Sigmoid colon (tissue), 7 donors: ENCODE measurements at regions of chr12 and their contacts with region 1.

Region 1: GRCh38 chr12:13428538-13429265 is 232.2 kb downstream of the EMP1 start:
- DNase-seq: peak; percentile 66
- H3K4me3 ChIP-seq: no peak overlapping the region
- H3K27ac ChIP-seq: peak overlapping the region in 3 of 4 donors; percentile 58 to 75 (median 66)
- H3K4me1 ChIP-seq: peaks cover 0 to 25% (median 20%) of the 10 kb centered on the region in 4 donors
- H3K27me3 ChIP-seq: no peaks in the 10 kb centered on the region
- CTCF ChIP-seq: no peak
- EP300 ChIP-seq: no peak
- POLR2A ChIP-seq: no peak

Region 2: DNA sequence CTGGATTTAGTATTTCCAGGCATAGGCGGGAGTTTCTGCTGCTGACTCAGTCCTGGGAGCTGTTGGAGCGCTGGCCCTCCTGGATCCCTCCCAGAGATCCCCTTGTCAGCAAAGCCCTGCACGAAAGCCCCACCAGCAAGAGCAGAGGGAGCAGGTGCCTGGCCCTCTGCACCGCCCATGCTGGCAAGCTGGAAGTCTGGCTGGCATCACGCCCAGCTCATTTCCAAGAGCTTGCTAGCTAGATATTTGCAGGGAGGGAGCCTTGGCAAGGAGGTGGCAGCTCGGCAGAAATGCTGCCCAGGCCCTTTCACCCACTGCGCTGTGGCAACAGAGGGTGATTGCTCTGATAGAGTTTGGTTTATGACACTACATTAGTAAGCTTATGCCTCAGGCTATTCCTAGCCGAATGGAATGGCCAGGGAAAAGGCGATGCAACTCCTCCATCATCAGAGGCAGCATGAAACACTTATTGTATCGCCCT is 38.3 kb before region 1 on chr12:
- intact Hi-C with region 1: loop called (anchors 2 kb)
- DNase-seq: peak; percentile 97
- H3K4me3 ChIP-seq: no peak overlapping the region
- H3K27ac ChIP-seq: peak overlapping the region; percentile 64 to 76 (median 68)
- H3K4me1 ChIP-seq: peaks cover 0 to 21% (median 17%) of the 10 kb centered on the region in 4 donors
- H3K27me3 ChIP-seq: no peaks in the 10 kb centered on the region
- CTCF ChIP-seq: no peak
- EP300 ChIP-seq: no peak
- POLR2A ChIP-seq: no peak

Region 3: GRCh38 chr12:13609894-13610679 is 181.4 kb after region 1 on chr12:
- intact Hi-C with region 1: no loop called
- DNase-seq: no peak
- H3K4me3 ChIP-seq: no peak overlapping the region
- H3K27ac ChIP-seq: no peak overlapping the region
- H3K4me1 ChIP-seq: no peaks in the 10 kb centered on the region
- H3K27me3 ChIP-seq: no peaks in the 10 kb centered on the region
- CTCF ChIP-seq: no peak
- EP300 ChIP-seq: no peak
- POLR2A ChIP-seq: no peak

Region 4: GRCh38 chr12:13727707-13728195 is 299.0 kb after region 1 on chr12:
- intact Hi-C with region 1: no loop called
- DNase-seq: no peak
- H3K4me3 ChIP-seq: no peak overlapping the region
- H3K27ac ChIP-seq: no peak overlapping the region
- H3K4me1 ChIP-seq: no peaks in the 10 kb centered on the region
- H3K27me3 ChIP-seq: no peaks in the 10 kb centered on the region
- CTCF ChIP-seq: no peak
- EP300 ChIP-seq: no peak
- POLR2A ChIP-seq: no peak